ENCODE measurements at regions of chr1 and their contacts with region 1.

Region 1: GRCh38 chr1:35030756-35031446 is 844 bp downstream of the ZMYM6 start:
- DNase-seq: peak; percentile 64
- H3K4me3 Mint-ChIP-seq: peak overlapping the region; percentile 93
- H3K27ac Mint-ChIP-seq: peak overlapping the region; percentile 93
- H3K4me1 Mint-ChIP-seq: peaks cover 39% of the 10 kb centered on the region
- H3K27me3 Mint-ChIP-seq: no peaks in the 10 kb centered on the region

Region 2: GRCh38 chr1:34412598-34413370 is 618.1 kb before region 1 on chr1:
- CTCF ChIA-PET with region 1: no interaction called
- intact Hi-C with region 1: no loop called
- DNase-seq: no peak
- H3K4me3 Mint-ChIP-seq: no peak overlapping the region
- H3K27ac Mint-ChIP-seq: no peak overlapping the region
- H3K4me1 Mint-ChIP-seq: no peaks in the 10 kb centered on the region
- H3K27me3 Mint-ChIP-seq: peaks cover 21% of the 10 kb centered on the region

Region 3: GRCh38 chr1:34529935-34530859 is 500.7 kb before region 1 on chr1:
- CTCF ChIA-PET with region 1: no interaction called
- intact Hi-C with region 1: no loop called
- DNase-seq: no peak
- H3K4me3 Mint-ChIP-seq: no peak overlapping the region
- H3K27ac Mint-ChIP-seq: no peak overlapping the region
- H3K4me1 Mint-ChIP-seq: no peaks in the 10 kb centered on the region
- H3K27me3 Mint-ChIP-seq: peaks cover 25% of the 10 kb centered on the region

Region 4: DNA sequence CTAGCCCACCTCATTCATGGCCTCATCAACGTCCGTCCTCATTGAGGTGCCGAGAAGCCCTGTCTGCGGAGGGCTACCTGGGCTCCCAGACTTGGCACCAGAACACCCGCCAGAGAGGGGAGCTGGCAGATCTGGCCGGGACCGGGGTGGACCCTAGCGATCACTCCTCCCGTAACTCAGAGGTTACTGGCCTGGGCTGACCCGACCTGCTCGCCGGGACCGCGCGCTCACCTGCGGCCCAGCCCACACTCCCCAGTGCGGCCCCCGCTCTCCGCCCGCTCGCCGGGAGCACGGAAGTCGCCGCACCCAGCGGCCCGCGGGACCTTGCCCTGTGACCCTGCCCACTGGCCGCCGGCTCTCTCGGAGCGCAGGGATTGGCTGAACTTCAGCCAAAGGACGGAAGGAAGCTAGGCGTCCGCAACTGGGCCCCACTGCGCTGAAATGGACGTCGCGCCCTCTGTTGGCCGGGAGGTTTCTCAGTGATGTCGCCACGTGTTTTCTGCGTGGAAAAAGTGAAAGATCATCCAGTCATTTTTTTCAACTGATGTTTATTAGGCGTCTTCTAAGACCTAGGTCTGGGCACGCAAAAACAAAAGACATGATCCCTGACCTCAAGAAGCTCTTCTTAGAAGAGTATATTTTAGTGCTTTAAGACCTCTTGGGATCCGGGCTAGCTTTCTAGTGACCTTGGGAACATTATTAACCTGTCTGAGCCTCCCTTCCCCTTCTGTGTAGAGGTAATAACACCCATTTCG is 171.3 kb before region 1 on chr1 and contains the start of gene SMIM12:
- CTCF ChIA-PET with region 1: no interaction called
- intact Hi-C with region 1: loop called (anchors 2 kb)
- DNase-seq: peak; percentile 96
- H3K4me3 Mint-ChIP-seq: peak within 1 kb of the TSS; percentile 98
- H3K27ac Mint-ChIP-seq: peak within 1 kb of the TSS; percentile 94
- H3K4me1 Mint-ChIP-seq: peaks cover 53% of the 10 kb centered on the region
- H3K27me3 Mint-ChIP-seq: no peaks in the 10 kb centered on the region
- total RNA-seq, gene SMIM12: 37.6 to 38.6 TPM

Region 5: DNA sequence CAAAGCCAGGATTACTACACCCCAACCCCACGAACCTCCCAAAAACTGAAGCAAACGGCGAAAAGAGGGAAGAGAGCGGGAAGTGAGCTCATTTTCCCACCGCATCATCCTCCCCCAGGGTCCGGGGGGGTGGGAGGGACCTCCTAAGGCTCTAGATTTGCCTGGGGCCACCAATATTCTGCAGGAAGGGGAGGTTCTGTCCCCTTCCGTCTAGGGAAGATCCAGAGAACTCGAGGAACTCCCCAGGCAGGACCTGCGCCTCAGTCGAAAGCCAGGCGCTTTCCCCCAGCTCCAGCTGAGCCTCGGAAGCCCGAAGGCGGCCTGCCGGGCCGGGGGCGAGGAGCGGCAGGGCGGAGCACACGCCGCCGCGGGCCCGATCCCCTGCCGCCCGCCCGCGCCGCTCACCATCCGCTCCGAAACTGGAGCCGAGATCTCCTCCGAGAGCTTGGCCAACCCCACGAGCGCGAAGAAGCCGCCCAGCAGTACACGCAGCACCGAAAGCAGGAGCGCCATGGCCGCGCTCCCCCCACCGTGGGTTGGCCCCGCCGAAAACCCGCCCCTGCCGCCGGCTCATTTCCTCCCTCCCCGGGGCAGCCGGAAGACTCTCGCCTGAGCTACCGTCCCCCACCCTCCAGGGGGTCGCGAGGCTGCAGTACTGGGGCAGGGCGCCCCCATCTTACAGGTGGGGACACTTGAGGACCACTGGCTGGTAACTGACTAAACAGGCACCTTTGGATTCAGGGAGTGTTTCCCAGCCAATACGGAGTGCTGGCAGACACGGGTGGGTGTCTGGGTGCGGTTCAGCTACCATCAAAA is 45.9 kb before region 1 on chr1 and contains the start of gene TMEM35B:
- CTCF ChIA-PET with region 1: interaction called, 5 read pairs
- intact Hi-C with region 1: loop called (anchors 2 kb)
- DNase-seq: peak; percentile 81
- H3K4me3 Mint-ChIP-seq: peak within 1 kb of the TSS; percentile 97
- H3K27ac Mint-ChIP-seq: peak within 1 kb of the TSS; percentile 93
- H3K4me1 Mint-ChIP-seq: peaks cover 49% of the 10 kb centered on the region
- H3K27me3 Mint-ChIP-seq: no peaks in the 10 kb centered on the region
- total RNA-seq, gene TMEM35B: 18.2 to 19.9 TPM

Region 6: DNA sequence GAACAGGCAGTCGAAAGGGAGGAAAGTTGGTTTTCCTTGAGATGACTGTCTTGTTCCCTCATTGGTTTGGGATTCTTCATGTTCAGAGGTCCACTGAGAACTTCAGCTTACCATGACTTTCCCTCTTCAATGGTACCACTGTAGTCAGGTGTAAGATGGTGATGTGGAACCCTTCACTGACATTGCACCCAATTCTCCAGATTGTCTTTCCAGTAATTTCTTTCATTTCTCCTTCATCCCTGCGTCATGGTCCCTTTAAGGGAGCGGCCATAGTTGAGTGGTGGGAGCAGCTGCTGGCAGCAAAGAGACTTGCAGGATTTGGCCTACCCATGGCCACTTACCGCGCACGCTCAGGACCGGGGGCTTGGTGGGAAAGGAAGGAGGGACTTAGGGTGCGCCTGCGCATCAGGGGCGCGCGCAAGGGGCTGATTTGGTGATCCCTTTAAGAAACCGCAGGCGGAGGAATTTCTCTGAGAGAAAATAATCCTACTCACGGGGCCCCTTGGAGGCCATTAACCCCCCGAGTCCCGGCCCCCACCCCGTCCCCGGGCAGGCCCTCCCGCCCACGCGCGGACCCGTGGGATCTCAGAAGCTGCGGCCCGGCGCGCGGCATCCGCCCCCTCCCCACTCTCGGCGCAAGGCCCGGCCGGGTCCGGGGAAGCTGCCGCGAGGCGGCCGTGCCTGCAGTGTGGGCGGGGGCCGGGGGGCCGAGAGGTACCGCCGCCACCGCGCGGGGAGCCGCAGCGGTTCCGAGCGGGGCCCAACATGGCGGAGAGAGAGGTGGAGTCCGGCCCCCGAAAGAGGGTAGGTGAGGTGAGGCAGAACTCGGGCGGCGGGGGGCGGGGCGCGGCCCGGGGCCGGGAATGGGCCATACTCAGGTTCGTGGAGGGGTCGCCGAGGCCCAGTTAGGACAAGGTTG is 237.6 kb after region 1 on chr1 and contains the start of gene ZMYM4:
- CTCF ChIA-PET with region 1: no interaction called
- intact Hi-C with region 1: loop called (anchors 1 kb)
- DNase-seq: peak; percentile 91
- H3K4me3 Mint-ChIP-seq: peak within 1 kb of the TSS; percentile 80
- H3K27ac Mint-ChIP-seq: peak within 1 kb of the TSS; percentile 82
- H3K4me1 Mint-ChIP-seq: peaks cover 22% of the 10 kb centered on the region
- H3K27me3 Mint-ChIP-seq: peaks cover 4% of the 10 kb centered on the region
- total RNA-seq, gene ZMYM4: 18.6 to 19.2 TPM

Region 7: DNA sequence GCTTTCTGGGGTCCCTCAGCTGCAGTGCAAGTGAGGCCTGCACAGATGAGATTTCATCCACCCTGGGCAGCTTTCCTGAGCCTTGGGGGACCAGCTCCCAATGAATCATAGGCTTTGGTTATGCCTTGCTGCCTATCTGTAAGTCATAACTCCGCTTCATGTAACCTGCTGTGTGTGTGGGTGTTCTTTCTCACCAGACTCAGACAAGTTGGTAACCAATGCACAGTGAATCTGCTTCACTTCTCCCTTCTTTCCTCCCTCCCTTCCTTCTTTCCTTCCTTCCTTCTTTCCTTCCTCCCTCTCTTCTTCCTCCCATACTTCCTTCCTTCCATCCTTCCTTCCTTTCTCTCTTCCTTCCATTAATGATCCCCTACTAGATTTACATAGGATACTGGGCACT is 644.9 kb after region 1 on chr1:
- CTCF ChIA-PET with region 1: no interaction called
- intact Hi-C with region 1: no loop called
- DNase-seq: no peak
- H3K4me3 Mint-ChIP-seq: no peak overlapping the region
- H3K27ac Mint-ChIP-seq: no peak overlapping the region
- H3K4me1 Mint-ChIP-seq: no peaks in the 10 kb centered on the region
- H3K27me3 Mint-ChIP-seq: peaks cover 2% of the 10 kb centered on the region

Measured in activated naive CD4-positive, alpha-beta T cell treated with anti-CD3 and anti-CD28 coated beads for 36 hours (primary cell).